PC-9 (cell line): ENCODE measurements at regions of chr5 and their contacts with region 1.

Region 1: DNA sequence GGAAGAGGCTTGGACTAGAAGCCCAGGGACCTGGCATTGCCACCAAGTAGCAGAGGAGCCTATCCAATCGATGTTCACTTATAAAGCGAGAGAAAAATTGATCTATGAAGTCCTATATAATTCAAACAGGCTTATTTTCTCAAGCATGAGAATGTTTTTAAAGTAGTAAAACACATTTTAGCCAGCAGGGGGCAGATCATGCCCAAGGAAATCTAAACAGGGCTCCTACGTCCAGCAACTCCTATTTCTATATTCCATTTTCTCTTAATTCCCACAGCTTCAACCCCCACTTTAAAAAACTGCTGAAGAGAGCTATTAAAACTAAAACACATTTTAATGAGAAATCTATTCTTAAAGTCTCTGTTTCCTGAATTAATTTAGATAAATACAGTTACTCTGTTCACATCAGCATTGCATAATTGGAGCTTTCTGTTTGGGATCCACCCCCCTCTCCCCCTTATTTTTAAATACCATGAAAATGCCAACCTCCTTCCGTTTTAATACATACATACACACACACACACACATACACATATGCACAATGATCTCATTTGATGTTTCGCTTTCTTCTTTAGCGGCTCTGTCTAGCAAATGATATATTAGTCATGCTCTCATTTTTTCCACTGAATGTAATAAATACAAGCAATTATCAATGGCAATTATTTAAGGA is 144.9 kb downstream of the MYO10 start:
- DNase-seq: peak; percentile 48 to 55
- H3K4me3 ChIP-seq: no peak overlapping the region
- H3K27ac ChIP-seq: no peak overlapping the region
- H3K4me1 ChIP-seq: no peaks in the 10 kb centered on the region
- H3K27me3 ChIP-seq: no peaks in the 10 kb centered on the region
- CTCF ChIP-seq: peak; percentile 92

Region 2: GRCh38 chr5:16690243-16690852 is 100.8 kb before region 1 on chr5:
- CTCF ChIA-PET with region 1: interaction called, 3 read pairs
- POLR2A ChIA-PET with region 1: no interaction called
- intact Hi-C with region 1: loop called (anchors 1 kb)
- DNase-seq: peak in 1 of 2 experiments; percentile 66
- H3K4me3 ChIP-seq: no peak overlapping the region
- H3K27ac ChIP-seq: no peak overlapping the region
- H3K4me1 ChIP-seq: no peaks in the 10 kb centered on the region
- H3K27me3 ChIP-seq: no peaks in the 10 kb centered on the region
- CTCF ChIP-seq: peak; percentile 85

Region 3: GRCh38 chr5:16826379-16827125 is 35.4 kb after region 1 on chr5:
- CTCF ChIA-PET with region 1: no interaction called
- POLR2A ChIA-PET with region 1: no interaction called
- intact Hi-C with region 1: no loop called
- DNase-seq: no peak
- H3K4me3 ChIP-seq: no peak overlapping the region
- H3K27ac ChIP-seq: no peak overlapping the region
- H3K4me1 ChIP-seq: no peaks in the 10 kb centered on the region
- H3K27me3 ChIP-seq: no peaks in the 10 kb centered on the region
- CTCF ChIP-seq: no peak

Region 4: DNA sequence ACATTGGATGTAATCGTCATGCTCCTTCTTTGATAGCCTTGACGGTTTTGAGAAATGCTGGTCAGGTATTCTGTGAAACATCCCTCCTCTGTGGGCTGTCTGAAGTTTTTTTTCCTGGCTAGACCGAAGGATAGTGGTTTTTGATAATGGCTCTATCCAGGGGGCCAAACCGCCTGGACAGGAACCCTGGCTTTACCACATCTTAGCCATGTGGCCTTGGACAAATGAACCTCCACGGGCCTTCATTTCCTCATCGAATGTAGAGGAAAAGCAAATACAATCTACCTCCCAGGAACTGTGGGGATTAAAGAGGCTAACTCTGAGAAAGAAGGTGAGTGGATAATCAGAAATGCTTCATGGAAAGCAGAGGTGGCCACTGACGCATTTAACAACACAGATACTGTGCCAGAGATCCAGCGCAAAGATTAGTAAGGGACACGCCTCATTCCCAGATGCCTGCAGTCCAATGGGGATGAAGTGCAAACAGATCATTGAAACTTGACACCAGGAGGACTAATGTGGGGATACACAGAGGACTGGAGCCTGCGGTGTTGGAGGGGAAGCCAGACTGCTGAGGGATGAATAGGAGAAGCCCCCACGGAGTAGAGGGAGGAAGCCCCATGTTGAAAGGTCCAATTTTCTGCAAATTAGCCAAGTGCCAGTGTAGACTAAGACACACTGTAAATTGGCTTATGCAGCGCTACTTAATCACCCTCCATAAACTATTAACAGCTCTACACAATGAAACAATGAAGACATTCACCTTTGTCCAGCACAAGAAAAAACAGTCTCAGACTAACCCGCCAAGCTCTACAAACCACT is 103.3 kb after region 1 on chr5:
- CTCF ChIA-PET with region 1: no interaction called
- POLR2A ChIA-PET with region 1: no interaction called
- intact Hi-C with region 1: loop called (anchors 1 kb)
- DNase-seq: peak; percentile 91 to 99
- H3K4me3 ChIP-seq: peak overlapping the region; percentile 41; the same call in 1 of the 2 replicates
- H3K27ac ChIP-seq: peak overlapping the region; percentile 92
- H3K4me1 ChIP-seq: peaks cover 88% of the 10 kb centered on the region
- H3K27me3 ChIP-seq: no peaks in the 10 kb centered on the region
- CTCF ChIP-seq: no peak

Region 5: GRCh38 chr5:17056056-17056690 is 265.0 kb after region 1 on chr5:
- CTCF ChIA-PET with region 1: interaction called, 5 read pairs
- POLR2A ChIA-PET with region 1: interaction called, 8 read pairs
- intact Hi-C with region 1: loop called (anchors 5 kb)
- DNase-seq: peak; percentile 5 to 49
- H3K4me3 ChIP-seq: no peak overlapping the region
- H3K27ac ChIP-seq: no peak overlapping the region
- H3K4me1 ChIP-seq: peaks cover 34% of the 10 kb centered on the region
- H3K27me3 ChIP-seq: no peaks in the 10 kb centered on the region
- CTCF ChIP-seq: no peak

Region 6: GRCh38 chr5:17204133-17204489 is 412.9 kb after region 1 on chr5:
- CTCF ChIA-PET with region 1: interaction called, 4 read pairs
- POLR2A ChIA-PET with region 1: no interaction called
- intact Hi-C with region 1: loop called (anchors 1 kb)
- DNase-seq: no peak
- H3K4me3 ChIP-seq: no peak overlapping the region
- H3K27ac ChIP-seq: no peak overlapping the region
- H3K4me1 ChIP-seq: no peaks in the 10 kb centered on the region
- H3K27me3 ChIP-seq: no peaks in the 10 kb centered on the region
- CTCF ChIP-seq: no peak